H1 (cell line): ENCODE measurements at regions of chr13 and their contacts with region 1.

Region 1: GRCh38 chr13:78137404-78138142 is 218.9 kb upstream of the EDNRB start:
- DNase-seq: peak; percentile 33 to 57
- H3K4me3 ChIP-seq: no peak overlapping the region
- H3K27ac ChIP-seq: no peak overlapping the region
- H3K4me1 ChIP-seq: peaks cover 0 to 5% (median under 1%) of the 10 kb centered on the region in 4 experiments; a peak in 1 of 7 replicates
- H3K27me3 ChIP-seq: no peaks in the 10 kb centered on the region
- CTCF ChIP-seq: peak in 2 of 3 experiments; percentile 58 to 74; a peak in 2 of 4 replicates
- EP300 ChIP-seq: no peak
- POLR2A ChIP-seq: no peak
- RAD21 ChIP-seq: peak; percentile 89 to 91

Region 2: DNA sequence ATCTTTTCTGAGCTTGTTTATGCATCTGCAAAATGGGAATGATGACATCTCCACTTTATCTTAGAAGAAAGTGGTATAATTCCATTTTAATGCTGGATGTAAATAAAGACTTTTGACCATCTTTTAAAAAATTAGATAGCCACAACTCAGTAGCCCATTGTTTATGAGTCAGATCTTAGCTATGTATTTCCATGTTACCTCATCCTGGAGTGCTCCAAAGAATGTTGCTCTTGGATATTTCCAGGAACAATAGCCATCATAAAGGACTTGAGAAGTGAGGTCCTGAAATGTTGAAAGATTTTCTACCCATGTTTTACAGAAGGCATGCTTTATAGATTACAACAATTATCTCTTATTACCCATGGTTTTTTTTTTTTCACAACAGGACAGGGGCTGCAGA is 10.3 kb after region 1 on chr13:
- CTCF ChIA-PET with region 1: interaction called, 16 read pairs
- POLR2A ChIA-PET with region 1: no interaction called
- DNase-seq: no peak
- H3K4me3 ChIP-seq: no peak overlapping the region
- H3K27ac ChIP-seq: no peak overlapping the region
- H3K4me1 ChIP-seq: no peaks in the 10 kb centered on the region
- H3K27me3 ChIP-seq: no peaks in the 10 kb centered on the region
- CTCF ChIP-seq: no peak
- EP300 ChIP-seq: no peak
- POLR2A ChIP-seq: no peak
- RAD21 ChIP-seq: no peak